K562 (cell line): ENCODE measurements at regions of chr18 and their contacts with region 1.

Region 1: GRCh38 chr18:21955757-21956652 is 213.4 kb upstream of the GATA6 start:
- DNase-seq: peak; percentile 81 to 88 (median 84)
- ATAC-seq: peak; percentile 100
- H3K4me3 ChIP-seq: no peak overlapping the region
- H3K27ac ChIP-seq: no peak overlapping the region
- H3K4me1 ChIP-seq: no peaks in the 10 kb centered on the region
- H3K27me3 ChIP-seq: peaks cover 14 to 19% of the 10 kb centered on the region in 2 experiments; a peak in 3 of 5 replicates
- CTCF ChIP-seq: peak; percentile 90 to 96 (median 91)
- EP300 ChIP-seq: no peak
- POLR2A ChIP-seq: no peak
- RAD21 ChIP-seq: peak; percentile 68 to 88

Region 2: GRCh38 chr18:21194871-21195771 is 760.9 kb before region 1 on chr18:
- CTCF ChIA-PET with region 1: interaction called, 4 read pairs
- POLR2A ChIA-PET with region 1: no interaction called
- in situ Hi-C with region 1: no loop called
- intact Hi-C with region 1: loop called (anchors 5 kb)
- DNase-seq: peak; percentile 14 to 40 (median 18)
- ATAC-seq: 0 out of 3 replicates have a peak, but pooled peaks have one; percentile 61
- H3K4me3 ChIP-seq: no peak overlapping the region
- H3K27ac ChIP-seq: no peak overlapping the region
- H3K4me1 ChIP-seq: no peaks in the 10 kb centered on the region
- H3K27me3 ChIP-seq: no peaks in the 10 kb centered on the region
- CTCF ChIP-seq: peak; percentile 34 to 81 (median 47); a peak in 4 of 6 replicates
- EP300 ChIP-seq: no peak
- POLR2A ChIP-seq: no peak
- RAD21 ChIP-seq: peak; percentile 63 to 81

Region 3: GRCh38 chr18:21489119-21489750 is 466.8 kb before region 1 on chr18:
- CTCF ChIA-PET with region 1: interaction called, 18 read pairs
- POLR2A ChIA-PET with region 1: no interaction called
- in situ Hi-C with region 1: no loop called
- intact Hi-C with region 1: loop called (anchors 5 kb)
- DNase-seq: peak; percentile 71 to 78 (median 72)
- ATAC-seq: peak; percentile 92
- H3K4me3 ChIP-seq: no peak overlapping the region
- H3K27ac ChIP-seq: no peak overlapping the region
- H3K4me1 ChIP-seq: peaks cover 5% of the 10 kb centered on the region in 2 experiments; a peak in 1 of 5 replicates
- H3K27me3 ChIP-seq: peaks cover 0 to 8% of the 10 kb centered on the region in 2 experiments; a peak in 2 of 5 replicates
- CTCF ChIP-seq: peak; percentile 77 to 90 (median 86)
- EP300 ChIP-seq: no peak
- POLR2A ChIP-seq: no peak
- RAD21 ChIP-seq: peak; percentile 56 to 88

Region 4: GRCh38 chr18:21897811-21898210 is 58.2 kb before region 1 on chr18:
- CTCF ChIA-PET with region 1: no interaction called
- POLR2A ChIA-PET with region 1: no interaction called
- in situ Hi-C with region 1: no loop called
- intact Hi-C with region 1: loop called (anchors 1 kb)
- DNase-seq: peak; percentile 55 to 68 (median 60)
- ATAC-seq: peak; percentile 90
- H3K4me3 ChIP-seq: no peak overlapping the region
- H3K27ac ChIP-seq: no peak overlapping the region
- H3K4me1 ChIP-seq: peaks cover 0 to 6% of the 10 kb centered on the region in 2 experiments; a peak in 2 of 5 replicates
- H3K27me3 ChIP-seq: peaks cover 2 to 6% of the 10 kb centered on the region in 2 experiments; a peak in 2 of 5 replicates
- CTCF ChIP-seq: peak; percentile 77 to 80 (median 78)
- EP300 ChIP-seq: no peak
- POLR2A ChIP-seq: no peak
- RAD21 ChIP-seq: peak; percentile 36 to 82; a peak in 3 of 4 replicates

Region 5: GRCh38 chr18:21914739-21915319 is 41.2 kb before region 1 on chr18:
- CTCF ChIA-PET with region 1: no interaction called
- POLR2A ChIA-PET with region 1: no interaction called
- in situ Hi-C with region 1: no loop called
- intact Hi-C with region 1: loop called (anchors 1 kb)
- DNase-seq: peak; percentile 26 to 46 (median 36)
- ATAC-seq: peak; percentile 70
- H3K4me3 ChIP-seq: no peak overlapping the region
- H3K27ac ChIP-seq: no peak overlapping the region
- H3K4me1 ChIP-seq: no peaks in the 10 kb centered on the region
- H3K27me3 ChIP-seq: peaks cover 1 to 8% of the 10 kb centered on the region in 2 experiments; a peak in 3 of 5 replicates
- CTCF ChIP-seq: peak; percentile 69 to 77 (median 69)
- EP300 ChIP-seq: no peak
- POLR2A ChIP-seq: no peak
- RAD21 ChIP-seq: peak in 1 of 2 experiments; percentile 74; a peak in 3 of 4 replicates

Region 6: DNA sequence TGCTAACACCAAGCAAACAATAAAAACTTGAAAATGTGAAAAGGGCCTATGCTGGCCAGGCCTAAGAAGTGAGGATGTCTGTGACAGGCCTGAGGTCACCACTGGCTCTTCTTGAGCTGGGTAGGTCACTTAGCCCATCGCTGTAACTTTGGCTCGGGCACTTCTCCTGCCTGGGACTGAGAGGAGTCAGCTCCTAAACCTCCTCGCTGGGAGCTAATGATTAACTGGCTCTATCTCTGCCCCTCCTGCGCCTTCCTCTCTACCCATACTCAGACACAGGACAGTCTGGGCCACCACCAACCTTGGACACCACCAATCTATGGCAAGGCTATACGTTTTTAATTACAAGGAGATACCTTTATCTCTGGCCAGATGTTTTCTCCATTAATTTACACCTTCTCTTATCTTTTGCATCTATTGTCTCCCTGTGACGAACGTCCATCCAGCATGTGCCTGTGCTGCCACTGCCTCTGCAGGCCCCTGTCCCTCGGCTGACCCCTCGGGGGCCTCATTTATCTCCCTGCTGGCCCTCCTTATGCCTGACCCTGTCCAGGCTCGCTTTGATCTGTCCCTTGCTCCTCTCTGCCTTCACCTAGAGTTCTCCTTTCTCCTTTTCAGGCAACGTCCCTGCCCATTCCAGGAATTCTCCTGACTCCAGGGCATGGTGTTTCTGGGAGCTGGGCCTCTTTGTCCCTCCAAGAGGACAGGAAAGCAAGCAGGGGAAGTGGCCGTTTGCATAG is 64.3 kb after region 1 on chr18:
- CTCF ChIA-PET with region 1: no interaction called
- POLR2A ChIA-PET with region 1: no interaction called
- in situ Hi-C with region 1: no loop called
- intact Hi-C with region 1: no loop called
- DNase-seq: no peak
- ATAC-seq: peak; percentile 50
- H3K4me3 ChIP-seq: no peak overlapping the region
- H3K27ac ChIP-seq: no peak overlapping the region
- H3K4me1 ChIP-seq: no peaks in the 10 kb centered on the region
- H3K27me3 ChIP-seq: peaks cover 10 to 21% of the 10 kb centered on the region in 2 experiments; a peak in 3 of 5 replicates
- CTCF ChIP-seq: no peak
- EP300 ChIP-seq: no peak
- POLR2A ChIP-seq: no peak
- RAD21 ChIP-seq: no peak

Region 7: GRCh38 chr18:22517356-22517755 is 561.4 kb after region 1 on chr18:
- CTCF ChIA-PET with region 1: no interaction called
- POLR2A ChIA-PET with region 1: no interaction called
- in situ Hi-C with region 1: no loop called
- intact Hi-C with region 1: no loop called
- DNase-seq: no peak
- ATAC-seq: no peak
- H3K4me3 ChIP-seq: no peak overlapping the region
- H3K27ac ChIP-seq: no peak overlapping the region
- H3K4me1 ChIP-seq: no peaks in the 10 kb centered on the region
- H3K27me3 ChIP-seq: peaks cover 0 to 8% of the 10 kb centered on the region in 2 experiments; a peak in 2 of 5 replicates
- CTCF ChIP-seq: no peak
- EP300 ChIP-seq: no peak
- POLR2A ChIP-seq: no peak
- RAD21 ChIP-seq: no peak